ENCODE measurements at regions of chr6 and their contacts with region 1.

Region 1: GRCh38 chr6:3592371-3592941 is 135.6 kb upstream of the SLC22A23 start:
- DNase-seq: peak; percentile 99
- H3K4me3 Mint-ChIP-seq: no peak overlapping the region
- H3K27ac Mint-ChIP-seq: peak overlapping the region; percentile 69
- H3K4me1 Mint-ChIP-seq: peaks cover 17% of the 10 kb centered on the region
- H3K27me3 Mint-ChIP-seq: no peaks in the 10 kb centered on the region
- CTCF ChIP-seq: no peak

Region 2: GRCh38 chr6:3312604-3313231 is 279.7 kb before region 1 on chr6:
- CTCF ChIA-PET with region 1: no interaction called
- POLR2A ChIA-PET with region 1: no interaction called
- intact Hi-C with region 1: no loop called
- DNase-seq: no peak
- H3K4me3 Mint-ChIP-seq: no peak overlapping the region
- H3K27ac Mint-ChIP-seq: no peak overlapping the region
- H3K4me1 Mint-ChIP-seq: peaks cover 9% of the 10 kb centered on the region
- H3K27me3 Mint-ChIP-seq: no peaks in the 10 kb centered on the region
- CTCF ChIP-seq: no peak

Region 3: GRCh38 chr6:3390698-3391097 is 201.8 kb before region 1 on chr6:
- CTCF ChIA-PET with region 1: no interaction called
- POLR2A ChIA-PET with region 1: interaction called, 5 read pairs
- intact Hi-C with region 1: loop called (anchors 1 kb)
- DNase-seq: peak; percentile 99
- H3K4me3 Mint-ChIP-seq: peak overlapping the region; percentile 49
- H3K27ac Mint-ChIP-seq: no peak overlapping the region
- H3K4me1 Mint-ChIP-seq: peaks cover 7% of the 10 kb centered on the region
- H3K27me3 Mint-ChIP-seq: no peaks in the 10 kb centered on the region
- CTCF ChIP-seq: no peak

Region 4: GRCh38 chr6:3471711-3472110 is 120.7 kb before region 1 on chr6:
- CTCF ChIA-PET with region 1: no interaction called
- POLR2A ChIA-PET with region 1: interaction called, 15 read pairs
- intact Hi-C with region 1: no loop called
- DNase-seq: no peak
- H3K4me3 Mint-ChIP-seq: no peak overlapping the region
- H3K27ac Mint-ChIP-seq: no peak overlapping the region
- H3K4me1 Mint-ChIP-seq: peaks cover 12% of the 10 kb centered on the region
- H3K27me3 Mint-ChIP-seq: no peaks in the 10 kb centered on the region
- CTCF ChIP-seq: no peak

Region 5: GRCh38 chr6:3506199-3506598 is 86.3 kb before region 1 on chr6:
- CTCF ChIA-PET with region 1: no interaction called
- POLR2A ChIA-PET with region 1: interaction called, 16 read pairs
- intact Hi-C with region 1: no loop called
- DNase-seq: no peak
- H3K4me3 Mint-ChIP-seq: no peak overlapping the region
- H3K27ac Mint-ChIP-seq: peak overlapping the region; percentile 88
- H3K4me1 Mint-ChIP-seq: peaks cover 22% of the 10 kb centered on the region
- H3K27me3 Mint-ChIP-seq: no peaks in the 10 kb centered on the region
- CTCF ChIP-seq: no peak

Region 6: DNA sequence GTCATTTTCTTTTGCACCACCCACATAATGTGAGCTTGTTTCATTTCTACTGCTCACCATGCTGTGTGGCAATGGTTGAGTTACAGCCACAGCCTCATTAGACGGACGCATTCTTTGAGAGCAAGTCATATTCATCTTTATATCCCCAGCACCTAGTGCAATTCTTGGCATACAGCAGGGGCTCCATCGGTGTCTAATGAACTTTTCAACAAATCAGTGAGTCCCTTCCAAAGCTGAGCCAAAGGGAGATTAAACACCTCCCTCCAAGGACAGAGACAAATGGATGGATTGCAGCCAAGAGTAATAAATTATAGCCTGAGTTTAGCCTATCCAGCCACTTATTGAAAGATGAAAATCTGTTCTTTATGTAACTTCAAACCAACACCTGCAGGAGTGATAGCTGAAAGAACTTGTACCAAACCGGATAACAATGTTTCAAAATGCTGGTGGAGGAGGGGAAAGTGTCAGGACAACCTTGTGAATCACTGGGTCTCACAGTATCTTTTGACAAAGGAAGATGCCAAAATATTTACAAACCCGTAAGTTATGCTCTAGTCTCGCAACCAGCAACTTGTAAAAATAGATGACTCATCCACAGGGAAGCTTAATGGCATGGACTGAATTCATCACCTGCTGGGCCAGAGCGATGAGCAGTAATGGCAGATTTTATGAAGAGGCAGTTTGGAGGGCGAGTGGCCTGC is 20.0 kb after region 1 on chr6:
- CTCF ChIA-PET with region 1: interaction called, 3 read pairs
- POLR2A ChIA-PET with region 1: interaction called, 35 read pairs
- intact Hi-C with region 1: loop called (anchors 1 kb)
- DNase-seq: peak; percentile 98
- H3K4me3 Mint-ChIP-seq: peak overlapping the region; percentile 28
- H3K27ac Mint-ChIP-seq: peak overlapping the region; percentile 36
- H3K4me1 Mint-ChIP-seq: peaks cover 21% of the 10 kb centered on the region
- H3K27me3 Mint-ChIP-seq: no peaks in the 10 kb centered on the region
- CTCF ChIP-seq: no peak

Region 7: DNA sequence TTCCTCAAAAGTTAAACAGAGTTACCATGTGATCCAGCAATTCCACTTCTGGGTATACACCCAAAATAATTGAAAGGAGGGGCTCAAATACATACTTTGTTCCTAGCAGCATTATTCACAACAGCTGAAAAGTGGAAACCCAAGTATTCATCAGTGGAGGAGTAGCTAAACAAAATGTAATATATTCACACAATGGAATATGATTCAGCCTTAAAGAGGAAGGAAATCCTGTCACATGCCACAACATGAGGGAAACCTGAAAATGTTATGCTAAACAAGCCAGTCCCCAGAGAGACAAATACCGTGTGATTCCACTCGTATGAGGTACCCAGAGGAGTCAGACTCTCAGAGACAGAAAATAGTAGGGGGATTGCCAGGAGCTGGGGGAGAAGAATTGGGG is 114.6 kb after region 1 on chr6:
- CTCF ChIA-PET with region 1: no interaction called
- POLR2A ChIA-PET with region 1: no interaction called
- intact Hi-C with region 1: no loop called
- DNase-seq: no peak
- H3K4me3 Mint-ChIP-seq: no peak overlapping the region
- H3K27ac Mint-ChIP-seq: no peak overlapping the region
- H3K4me1 Mint-ChIP-seq: no peaks in the 10 kb centered on the region
- H3K27me3 Mint-ChIP-seq: no peaks in the 10 kb centered on the region
- CTCF ChIP-seq: no peak

Region 8: GRCh38 chr6:4281341-4282293 is 689.2 kb after region 1 on chr6:
- CTCF ChIA-PET with region 1: no interaction called
- POLR2A ChIA-PET with region 1: no interaction called
- intact Hi-C with region 1: no loop called
- DNase-seq: peak; percentile 90
- H3K4me3 Mint-ChIP-seq: peak overlapping the region; percentile 75
- H3K27ac Mint-ChIP-seq: peak overlapping the region; percentile 86
- H3K4me1 Mint-ChIP-seq: peaks cover 23% of the 10 kb centered on the region
- H3K27me3 Mint-ChIP-seq: no peaks in the 10 kb centered on the region
- CTCF ChIP-seq: peak; percentile 37